CD8-positive, alpha-beta T cell (primary cell): ENCODE measurements at regions of chr10 and their contacts with region 1.

Region 1: GRCh38 chr10:114526504-114527238 is 122.4 kb upstream of the AFAP1L2 start:
- DNase-seq: peak; percentile 80 to 98 (median 90)
- ATAC-seq: peak; percentile 86
- H3K4me3 ChIP-seq: peak overlapping the region; percentile 69 to 70
- H3K4me3 Mint-ChIP-seq: peak overlapping the region; percentile 92
- H3K27ac ChIP-seq: peak overlapping the region; percentile 89 to 93
- H3K27ac Mint-ChIP-seq: peak overlapping the region; percentile 97
- H3K4me1 ChIP-seq: peaks cover 47% of the 10 kb centered on the region
- H3K4me1 Mint-ChIP-seq: peaks cover 59% of the 10 kb centered on the region
- H3K27me3 ChIP-seq: no peaks in the 10 kb centered on the region
- H3K27me3 Mint-ChIP-seq: no peaks in the 10 kb centered on the region
- CTCF ChIP-seq: no peak

Region 2: GRCh38 chr10:113960617-113961181 is 566.0 kb before region 1 on chr10:
- CTCF ChIA-PET with region 1: no interaction called
- POLR2A ChIA-PET with region 1: no interaction called
- intact Hi-C with region 1: loop called in 1 of 2 experiments (anchors 5 kb)
- DNase-seq: peak in 7 of 9 experiments; percentile 13 to 86 (median 56)
- ATAC-seq: peak; percentile 22
- H3K4me3 ChIP-seq: peak overlapping the region in 1 of 2 experiments; percentile 17
- H3K4me3 Mint-ChIP-seq: peak overlapping the region; percentile 46
- H3K27ac ChIP-seq: peak overlapping the region; percentile 20 to 68
- H3K27ac Mint-ChIP-seq: peak overlapping the region; percentile 83
- H3K4me1 ChIP-seq: peaks cover 36% of the 10 kb centered on the region
- H3K4me1 Mint-ChIP-seq: peaks cover 37% of the 10 kb centered on the region
- H3K27me3 ChIP-seq: no peaks in the 10 kb centered on the region
- H3K27me3 Mint-ChIP-seq: peaks cover 9% of the 10 kb centered on the region
- CTCF ChIP-seq: no peak

Region 3: DNA sequence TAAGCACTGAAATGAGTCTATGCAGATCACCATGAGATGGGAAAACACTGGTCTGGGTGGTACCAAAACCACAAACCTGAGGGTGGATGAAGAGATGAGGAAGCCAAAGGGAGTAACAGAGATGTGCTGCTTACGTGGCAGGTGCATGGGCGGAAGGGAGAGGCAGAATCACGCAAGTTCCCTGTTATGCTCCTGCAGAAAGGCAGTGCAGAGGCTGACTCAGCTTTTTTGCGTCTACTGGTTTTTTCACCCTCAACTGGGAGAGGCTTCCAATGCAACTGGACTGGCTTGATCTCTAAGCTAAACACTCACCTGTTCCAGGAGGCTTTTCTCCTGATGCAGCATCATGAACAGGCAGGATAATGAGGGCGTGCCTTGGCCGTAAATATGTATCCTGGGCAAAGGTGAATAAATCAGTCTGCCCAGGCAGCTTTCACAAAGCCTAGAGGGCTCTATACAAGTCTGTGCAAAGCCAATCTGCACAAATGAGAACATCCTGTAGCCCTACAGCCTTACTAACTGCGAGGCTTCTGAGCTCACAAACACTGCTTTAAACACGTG is 27.0 kb before region 1 on chr10:
- CTCF ChIA-PET with region 1: interaction called, 5 read pairs
- POLR2A ChIA-PET with region 1: interaction called, 29 read pairs
- intact Hi-C with region 1: loop called (anchors 1 to 5 kb)
- DNase-seq: peak in 7 of 9 experiments; percentile 19 to 80 (median 64)
- ATAC-seq: peak; percentile 50
- H3K4me3 ChIP-seq: peak overlapping the region in 1 of 2 experiments; percentile 21
- H3K4me3 Mint-ChIP-seq: peak overlapping the region; percentile 63
- H3K27ac ChIP-seq: peak overlapping the region; percentile 41 to 57
- H3K27ac Mint-ChIP-seq: peak overlapping the region; percentile 94
- H3K4me1 ChIP-seq: peaks cover 92% of the 10 kb centered on the region
- H3K4me1 Mint-ChIP-seq: peaks cover 91% of the 10 kb centered on the region
- H3K27me3 ChIP-seq: no peaks in the 10 kb centered on the region
- H3K27me3 Mint-ChIP-seq: no peaks in the 10 kb centered on the region
- CTCF ChIP-seq: no peak

Region 4: DNA sequence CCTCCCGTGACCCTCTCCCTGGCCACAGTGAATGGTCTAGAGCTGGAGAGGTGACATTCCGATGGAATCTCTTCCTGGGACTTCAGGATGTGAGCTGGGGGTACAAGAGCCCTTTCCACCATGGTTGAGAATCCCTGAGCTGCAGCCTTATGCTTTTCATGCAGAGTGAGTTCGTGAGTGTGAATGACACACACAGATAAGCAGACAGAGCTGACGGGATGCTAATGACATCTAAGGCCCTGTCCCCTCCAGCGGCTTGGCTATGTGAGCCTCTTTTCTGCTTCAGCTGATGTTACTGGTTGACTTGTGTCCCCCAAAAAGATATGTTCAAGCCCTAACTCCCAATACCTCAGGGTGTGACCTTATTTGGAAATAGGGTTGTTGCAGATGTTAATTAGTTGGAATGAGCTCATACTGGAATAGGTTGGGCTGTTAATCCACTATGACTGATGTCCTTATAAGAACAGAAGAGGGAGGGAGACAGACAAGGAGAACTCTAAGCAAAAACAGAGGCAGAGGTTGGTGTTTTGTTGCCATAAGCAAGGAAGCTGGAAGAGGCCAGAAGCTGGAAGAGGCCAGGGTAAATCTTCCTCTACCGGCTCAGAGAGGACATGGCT is 11.3 kb before region 1 on chr10:
- CTCF ChIA-PET with region 1: interaction called, 35 read pairs
- POLR2A ChIA-PET with region 1: interaction called, 64 read pairs
- intact Hi-C with region 1: loop called in 1 of 2 experiments (anchors 1 kb)
- DNase-seq: peak in 1 of 9 experiments; percentile 27
- ATAC-seq: peak; percentile 13
- H3K4me3 ChIP-seq: peak overlapping the region in 1 of 2 experiments; percentile 24
- H3K4me3 Mint-ChIP-seq: peak overlapping the region; percentile 77
- H3K27ac ChIP-seq: peak overlapping the region in 1 of 2 experiments; percentile 4
- H3K27ac Mint-ChIP-seq: peak overlapping the region; percentile 97
- H3K4me1 ChIP-seq: peaks cover 89% of the 10 kb centered on the region
- H3K4me1 Mint-ChIP-seq: peaks cover 98% of the 10 kb centered on the region
- H3K27me3 ChIP-seq: no peaks in the 10 kb centered on the region
- H3K27me3 Mint-ChIP-seq: no peaks in the 10 kb centered on the region
- CTCF ChIP-seq: no peak

Region 5: DNA sequence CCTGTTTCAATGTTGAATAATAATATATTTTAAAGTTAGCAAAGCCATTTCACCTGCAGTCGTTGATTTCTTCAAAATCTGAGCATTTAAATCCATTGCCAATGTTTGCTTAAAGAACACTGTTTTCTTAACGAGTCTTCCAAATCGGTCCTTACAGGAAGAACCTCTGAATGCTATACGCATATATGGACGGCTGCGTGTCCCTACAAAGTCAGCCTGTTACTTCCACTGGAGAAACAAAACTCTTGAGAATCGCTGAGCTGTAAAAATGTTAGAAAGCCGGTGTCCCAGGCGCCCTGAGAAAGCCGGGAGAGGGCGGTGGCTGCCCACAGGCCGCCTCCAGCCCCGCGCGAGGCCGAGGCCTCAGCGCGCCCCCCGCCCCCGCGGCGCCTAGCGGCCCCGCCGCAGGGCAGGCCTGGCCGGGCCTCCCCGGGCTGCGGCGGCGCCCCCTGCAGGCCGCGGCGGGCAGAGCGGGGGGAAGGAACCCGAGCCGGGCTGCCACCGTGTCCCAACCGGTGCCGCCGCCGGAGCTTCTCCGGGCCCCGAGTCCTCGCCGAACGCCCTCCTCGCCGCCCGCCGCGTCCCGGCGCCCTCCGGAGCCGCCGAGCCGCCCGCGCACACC is 294.7 kb after region 1 on chr10 and contains the start of gene FHIP2A:
- CTCF ChIA-PET with region 1: interaction called, 3 read pairs
- POLR2A ChIA-PET with region 1: interaction called, 12 read pairs
- intact Hi-C with region 1: no loop called
- DNase-seq: peak; percentile 73 to 91 (median 82)
- ATAC-seq: peak; percentile 93
- H3K4me3 ChIP-seq: peak within 1 kb of the TSS; percentile 70 to 75
- H3K4me3 Mint-ChIP-seq: peak within 1 kb of the TSS; percentile 95
- H3K27ac ChIP-seq: peak within 1 kb of the TSS; percentile 78 to 79
- H3K27ac Mint-ChIP-seq: peak within 1 kb of the TSS; percentile 94
- H3K4me1 ChIP-seq: peaks cover 11% of the 10 kb centered on the region
- H3K4me1 Mint-ChIP-seq: peaks cover 38% of the 10 kb centered on the region
- H3K27me3 ChIP-seq: no peaks in the 10 kb centered on the region
- H3K27me3 Mint-ChIP-seq: peaks cover 2% of the 10 kb centered on the region
- CTCF ChIP-seq: peak; percentile 35
- total RNA-seq, gene FHIP2A: 62.0 to 66.4 TPM